ENCODE measurements at regions of chr22 and their contacts with region 1.

Region 1: GRCh38 chr22:30920407-30920806 is 48.2 kb downstream of the MORC2 start:
- DNase-seq: peak; percentile 65
- H3K4me3 ChIP-seq: no peak overlapping the region
- H3K27ac ChIP-seq: no peak overlapping the region
- H3K4me1 ChIP-seq: no peaks in the 10 kb centered on the region
- H3K27me3 ChIP-seq: no peaks in the 10 kb centered on the region
- CTCF ChIP-seq: peak; percentile 39 to 83 (median 83)
- POLR2A ChIP-seq: no peak

Region 2: GRCh38 chr22:30628491-30628890 is 291.9 kb before region 1 on chr22:
- intact Hi-C with region 1: loop called (anchors 5 kb)
- DNase-seq: no peak
- H3K4me3 ChIP-seq: no peak overlapping the region
- H3K27ac ChIP-seq: no peak overlapping the region
- H3K4me1 ChIP-seq: no peaks in the 10 kb centered on the region
- H3K27me3 ChIP-seq: no peaks in the 10 kb centered on the region
- CTCF ChIP-seq: no peak
- POLR2A ChIP-seq: no peak

Region 3: DNA sequence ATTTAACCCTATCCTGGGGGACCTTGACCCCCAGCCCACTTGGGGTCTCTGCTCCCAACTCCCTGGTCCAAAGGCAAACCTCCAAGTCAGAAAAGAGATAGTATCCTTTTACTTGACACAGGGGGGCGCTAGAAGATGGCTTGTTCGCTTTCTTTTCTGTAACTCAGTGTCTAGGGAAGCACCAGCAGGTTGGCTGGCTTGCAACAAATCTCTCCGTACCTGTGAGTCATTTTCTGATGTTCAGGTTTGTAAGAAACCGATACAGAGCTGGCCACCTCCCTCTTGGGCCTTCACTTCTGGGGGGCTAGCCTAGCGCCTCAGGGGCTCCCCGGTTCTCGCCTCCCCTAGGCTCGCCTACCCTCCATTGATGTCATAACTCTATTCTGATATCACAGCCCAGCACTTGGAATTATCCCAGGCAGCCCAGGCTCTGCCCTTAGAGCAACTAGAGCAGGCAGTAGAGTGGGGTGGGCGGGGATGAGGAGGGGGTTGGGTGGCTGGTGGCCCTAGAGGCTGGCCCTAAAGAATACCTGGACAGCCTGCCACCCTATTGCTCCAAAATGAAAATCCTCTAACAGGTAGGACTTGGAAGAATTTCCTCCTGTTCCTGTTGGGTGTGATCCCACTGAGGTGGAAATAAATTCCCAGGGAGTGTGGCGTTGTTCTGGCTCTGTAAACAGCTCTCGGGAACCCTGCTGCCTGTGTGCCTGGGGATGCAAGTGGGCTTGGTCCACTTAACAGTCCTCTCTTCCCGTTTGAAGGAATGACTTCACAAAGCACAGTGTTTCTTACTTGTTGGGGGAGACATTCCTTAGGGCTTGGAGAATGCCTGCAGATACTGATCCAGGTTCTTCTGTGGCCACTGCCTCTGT is 156.4 kb before region 1 on chr22:
- intact Hi-C with region 1: loop called (anchors 5 kb)
- DNase-seq: peak; percentile 68
- H3K4me3 ChIP-seq: no peak overlapping the region
- H3K27ac ChIP-seq: no peak overlapping the region
- H3K4me1 ChIP-seq: no peaks in the 10 kb centered on the region
- H3K27me3 ChIP-seq: no peaks in the 10 kb centered on the region
- CTCF ChIP-seq: peak in 3 of 4 experiments; percentile 63 to 83 (median 71)
- POLR2A ChIP-seq: no peak